Activated CD4-positive, alpha-beta T cell treated with anti-CD3 and anti-CD28 coated beads, Interleukin-2, amount 10 ng/mL, durations not matched to agents 24 days and 14 days (primary cell): ENCODE measurements at regions of chr7 and their contacts with region 1.

Region 1: GRCh38 chr7:150668472-150668911 is 17.0 kb upstream of the GIMAP2 start:
- DNase-seq: peak; percentile 91
- H3K4me3 Mint-ChIP-seq: peak overlapping the region; percentile 43
- H3K27ac Mint-ChIP-seq: peak overlapping the region; percentile 93
- H3K4me1 Mint-ChIP-seq: peaks cover 69% of the 10 kb centered on the region
- H3K27me3 Mint-ChIP-seq: no peaks in the 10 kb centered on the region

Region 2: DNA sequence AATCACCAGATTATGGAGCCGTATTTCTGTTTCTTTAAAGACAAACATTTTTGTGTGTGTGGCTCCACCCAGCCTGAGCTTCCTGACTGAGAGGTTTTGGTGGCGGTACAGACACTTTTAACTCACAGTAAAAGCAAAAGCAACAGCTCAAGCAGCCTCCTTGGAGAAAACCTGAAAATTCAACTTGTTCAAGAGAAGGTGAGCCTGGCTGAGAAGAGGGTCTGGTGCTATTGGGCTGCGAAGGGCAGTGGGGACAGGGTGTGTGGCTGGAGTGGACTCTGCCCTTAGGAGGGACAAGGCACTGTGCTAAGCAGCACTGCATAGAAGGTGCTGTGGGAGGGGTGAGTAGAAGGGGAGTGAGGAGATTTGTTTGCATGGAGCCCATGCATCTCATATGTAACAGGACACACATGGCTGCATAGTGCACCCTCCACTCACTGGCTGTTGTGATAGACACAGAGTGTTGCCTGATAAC is 153.7 kb before region 1 on chr7 and contains the start of gene GIMAP7:
- intact Hi-C with region 1: loop called (anchors 2 kb)
- DNase-seq: peak; percentile 93
- H3K4me3 Mint-ChIP-seq: peak within 1 kb of the TSS; percentile 99
- H3K27ac Mint-ChIP-seq: peak within 1 kb of the TSS; percentile 99
- H3K4me1 Mint-ChIP-seq: peaks cover 54% of the 10 kb centered on the region
- H3K27me3 Mint-ChIP-seq: no peaks in the 10 kb centered on the region
- total RNA-seq, gene GIMAP7: 40.5 and 45.0 TPM in 2 replicates

Region 3: GRCh38 chr7:150567169-150567568 is 101.3 kb before region 1 on chr7 and contains the start of gene GIMAP4:
- intact Hi-C with region 1: loop called (anchors 1 kb)
- DNase-seq: peak; percentile 77
- H3K4me3 Mint-ChIP-seq: peak within 1 kb of the TSS; percentile 86
- H3K27ac Mint-ChIP-seq: peak within 1 kb of the TSS; percentile 95
- H3K4me1 Mint-ChIP-seq: peaks cover 59% of the 10 kb centered on the region
- H3K27me3 Mint-ChIP-seq: no peaks in the 10 kb centered on the region
- total RNA-seq, gene GIMAP4: 61.1 and 62.7 TPM in 2 replicates

Region 4: DNA sequence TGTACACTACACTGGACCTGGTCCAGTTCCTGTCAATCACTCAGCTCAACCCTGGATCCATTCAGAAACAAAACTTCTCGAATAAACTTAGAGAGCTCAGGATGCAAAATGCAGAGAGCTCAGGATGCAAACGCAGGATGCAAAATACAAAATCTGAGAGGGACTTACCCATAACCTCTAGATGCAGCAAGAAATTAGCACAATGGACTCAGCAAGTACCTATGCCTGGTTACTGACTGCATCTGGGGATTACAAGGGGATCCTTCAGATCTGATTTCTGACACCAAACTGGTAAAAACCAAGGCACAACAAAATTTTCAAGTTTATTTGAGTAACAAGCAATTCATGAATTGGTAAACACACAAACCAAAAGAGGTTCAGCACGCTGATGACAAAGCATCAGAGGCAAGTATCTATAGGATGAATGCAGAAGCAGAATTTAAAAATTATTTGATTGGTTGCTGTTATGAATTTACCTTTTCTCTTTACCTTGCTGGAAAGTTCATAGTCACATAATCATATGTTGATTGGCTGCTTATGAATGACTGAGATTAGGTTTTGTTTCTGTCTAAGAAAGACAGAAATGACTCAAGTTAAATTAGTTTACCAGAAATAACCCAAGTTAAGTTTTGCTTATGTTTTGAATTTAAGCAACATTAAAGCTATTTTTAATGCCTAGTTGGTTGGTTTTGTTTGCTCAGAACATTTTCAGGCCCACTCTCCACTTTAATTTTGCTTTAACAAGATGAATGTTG is 47.7 kb before region 1 on chr7:
- intact Hi-C with region 1: loop called (anchors 2 kb)
- DNase-seq: peak; percentile 67
- H3K4me3 Mint-ChIP-seq: peak overlapping the region; percentile 63
- H3K27ac Mint-ChIP-seq: peak overlapping the region; percentile 85
- H3K4me1 Mint-ChIP-seq: peaks cover 51% of the 10 kb centered on the region
- H3K27me3 Mint-ChIP-seq: no peaks in the 10 kb centered on the region

Region 5: GRCh38 chr7:150631866-150632864 is 36.3 kb before region 1 on chr7 and contains the start of gene GIMAP6:
- intact Hi-C with region 1: loop called (anchors 1 kb)
- DNase-seq: peak; percentile 85
- H3K4me3 Mint-ChIP-seq: peak within 1 kb of the TSS; percentile 93
- H3K27ac Mint-ChIP-seq: peak within 1 kb of the TSS; percentile 92
- H3K4me1 Mint-ChIP-seq: peaks cover 62% of the 10 kb centered on the region
- H3K27me3 Mint-ChIP-seq: no peaks in the 10 kb centered on the region
- total RNA-seq, gene GIMAP6: 35.5 and 35.8 TPM in 2 replicates

Region 6: DNA sequence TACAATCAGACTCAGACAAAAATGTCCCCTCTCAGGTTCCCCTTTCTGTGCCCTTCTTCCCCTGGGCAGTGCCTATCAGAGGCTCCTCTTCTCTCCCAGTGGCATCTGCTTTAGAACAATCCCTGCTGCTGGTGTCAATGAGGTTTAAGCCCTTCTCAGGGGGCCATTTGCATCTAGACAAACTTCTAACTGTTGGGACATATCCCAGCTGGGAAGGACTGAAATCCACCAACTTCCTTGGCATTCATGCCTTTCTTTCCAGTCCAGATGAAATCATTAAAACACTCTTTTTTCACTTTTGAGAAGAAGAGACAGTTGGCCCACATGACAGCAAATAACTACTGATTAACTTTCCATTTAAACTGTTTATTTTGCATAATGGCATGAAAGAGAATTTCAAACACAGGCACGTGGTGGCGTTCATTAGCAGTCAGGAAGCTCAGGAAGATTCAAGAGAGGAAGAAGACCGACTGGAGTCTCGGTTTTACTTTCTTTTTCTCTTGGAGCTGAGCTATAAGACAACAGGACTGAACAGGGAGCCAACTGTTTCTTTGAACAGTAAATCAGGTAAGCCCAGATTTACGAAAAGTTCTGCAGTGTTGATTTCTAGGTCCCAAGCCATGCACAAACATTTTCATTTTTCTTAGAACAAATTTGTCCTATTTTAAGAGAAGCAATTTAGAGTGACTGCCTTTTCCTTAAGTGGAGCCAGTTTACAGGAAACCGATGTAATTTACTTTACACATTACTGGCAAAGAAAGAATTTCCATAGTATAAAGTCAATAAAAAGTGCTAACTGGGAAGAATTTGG is 16.9 kb after region 1 on chr7 and contains the start of gene GIMAP2:
- intact Hi-C with region 1: loop called (anchors 1 kb)
- DNase-seq: peak; percentile 83
- H3K4me3 Mint-ChIP-seq: peak within 1 kb of the TSS; percentile 98
- H3K27ac Mint-ChIP-seq: peak within 1 kb of the TSS; percentile 99
- H3K4me1 Mint-ChIP-seq: peaks cover 65% of the 10 kb centered on the region
- H3K27me3 Mint-ChIP-seq: no peaks in the 10 kb centered on the region
- total RNA-seq, gene GIMAP2: 28.2 TPM in 2 replicates

Region 7: DNA sequence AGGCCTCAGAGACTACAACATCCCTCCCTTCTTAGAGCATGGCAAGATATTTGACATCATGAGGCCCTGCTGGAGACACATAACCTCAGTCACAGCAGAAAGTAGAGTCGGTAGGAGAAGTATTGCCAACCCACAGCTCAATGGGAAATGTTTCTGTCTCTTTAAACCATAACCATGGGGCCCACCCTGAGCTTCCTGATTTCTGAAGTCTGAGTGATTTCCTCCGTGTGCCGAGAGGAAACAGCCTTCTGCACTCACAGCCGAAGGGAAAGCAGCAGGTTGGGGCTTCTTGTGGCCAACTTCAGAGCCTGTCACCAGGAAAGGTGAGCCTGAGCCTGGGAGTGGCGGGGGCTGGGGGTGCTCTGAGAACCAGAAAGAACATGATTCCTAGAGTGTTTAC is 47.9 kb after region 1 on chr7 and contains the start of gene GIMAP1:
- intact Hi-C with region 1: loop called (anchors 1 kb)
- DNase-seq: peak; percentile 91
- H3K4me3 Mint-ChIP-seq: peak within 1 kb of the TSS; percentile 89
- H3K27ac Mint-ChIP-seq: peak within 1 kb of the TSS; percentile 87
- H3K4me1 Mint-ChIP-seq: peaks cover 52% of the 10 kb centered on the region
- H3K27me3 Mint-ChIP-seq: no peaks in the 10 kb centered on the region
- total RNA-seq, gene GIMAP1: 4.9 and 6.0 TPM in 2 replicates